Breast epithelium (tissue), 4 donors: ENCODE measurements at regions of chr5 and their contacts with region 1.

Region 1: GRCh38 chr5:123193176-123193575 is 104.1 kb downstream of the PRDM6 start:
- DNase-seq: no peak
- H3K4me3 ChIP-seq: no peak overlapping the region
- H3K27ac ChIP-seq: no peak overlapping the region
- H3K4me1 ChIP-seq: no peaks in the 10 kb centered on the region
- H3K27me3 ChIP-seq: no peaks in the 10 kb centered on the region
- CTCF ChIP-seq: no peak
- POLR2A ChIP-seq: no peak

Region 2: DNA sequence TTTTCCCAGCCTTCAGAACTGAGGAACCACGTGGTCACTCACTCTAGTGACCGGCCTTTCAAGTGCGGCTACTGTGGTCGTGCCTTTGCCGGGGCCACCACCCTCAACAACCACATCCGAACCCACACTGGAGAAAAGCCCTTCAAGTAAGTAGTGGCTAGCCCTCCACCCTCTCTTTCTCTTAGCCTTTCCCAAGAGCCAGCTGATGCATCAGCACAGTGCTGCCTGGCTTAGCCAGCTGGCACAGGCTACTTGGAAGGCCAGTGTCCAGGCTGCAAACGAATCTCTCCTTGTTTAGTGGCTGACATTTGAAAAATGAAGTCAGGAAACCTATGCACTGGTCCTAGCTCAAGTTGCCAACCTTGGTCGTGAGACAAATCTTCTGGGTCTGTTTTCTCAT is 13.0 kb before region 1 on chr5:
- intact Hi-C with region 1: loop called (anchors 1 kb)
- DNase-seq: no peak
- H3K4me3 ChIP-seq: no peak overlapping the region
- H3K27ac ChIP-seq: no peak overlapping the region
- H3K4me1 ChIP-seq: no peaks in the 10 kb centered on the region
- H3K27me3 ChIP-seq: no peaks in the 10 kb centered on the region
- CTCF ChIP-seq: no peak
- POLR2A ChIP-seq: no peak